Transverse colon (tissue), 4 donors: ENCODE measurements at regions of chr1 and their contacts with region 1.

Region 1: GRCh38 chr1:3249631-3250501 is 180.9 kb downstream of the PRDM16 start:
- DNase-seq: peak; percentile 11
- H3K4me3 ChIP-seq: no peak overlapping the region
- H3K27ac ChIP-seq: no peak overlapping the region
- H3K4me1 ChIP-seq: peaks cover 0 to 11% (median 5%) of the 10 kb centered on the region in 4 donors
- H3K27me3 ChIP-seq: peaks cover 43% of the 10 kb centered on the region
- CTCF ChIP-seq: no peak
- EP300 ChIP-seq: no peak
- POLR2A ChIP-seq: no peak

Region 2: GRCh38 chr1:3126756-3127597 is 122.9 kb before region 1 on chr1:
- in situ Hi-C with region 1: no loop called
- intact Hi-C with region 1: no loop called
- DNase-seq: no peak
- H3K4me3 ChIP-seq: no peak overlapping the region
- H3K27ac ChIP-seq: peak overlapping the region; percentile 21 to 53 (median 38)
- H3K4me1 ChIP-seq: peaks cover 0 to 21% (median 4%) of the 10 kb centered on the region in 4 donors
- H3K27me3 ChIP-seq: no peaks in the 10 kb centered on the region
- CTCF ChIP-seq: no peak
- EP300 ChIP-seq: no peak
- POLR2A ChIP-seq: no peak

Region 3: DNA sequence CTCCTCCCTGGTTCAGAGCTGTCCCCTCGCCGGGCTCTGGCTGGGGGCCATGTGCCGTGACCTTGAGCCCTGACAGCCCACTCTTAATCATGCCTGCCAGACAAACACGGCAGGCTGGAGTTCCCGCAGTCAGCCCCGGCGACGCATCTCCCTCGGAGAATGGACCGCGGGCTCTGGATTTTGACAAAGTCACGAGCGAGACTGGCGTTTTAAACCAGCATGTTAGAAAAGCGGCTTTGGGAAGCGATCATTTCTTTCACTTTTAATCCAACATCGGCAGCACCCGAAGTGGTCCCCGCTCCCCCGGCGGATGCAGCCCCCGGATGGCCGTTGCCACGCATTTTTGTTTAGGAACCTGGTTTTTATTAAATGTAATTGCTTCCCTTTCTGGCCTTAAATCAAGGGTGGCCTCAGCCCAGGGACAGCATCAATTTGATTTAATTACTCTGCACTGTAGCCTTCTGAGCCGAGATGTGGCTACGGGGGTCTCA is 110.0 kb before region 1 on chr1:
- in situ Hi-C with region 1: no loop called
- intact Hi-C with region 1: no loop called
- DNase-seq: no peak
- H3K4me3 ChIP-seq: peak overlapping the region in 1 of 4 donors; percentile 25
- H3K27ac ChIP-seq: no peak overlapping the region
- H3K4me1 ChIP-seq: peaks cover 0 to 10% (median 2%) of the 10 kb centered on the region in 4 donors
- H3K27me3 ChIP-seq: peaks cover 50% of the 10 kb centered on the region
- CTCF ChIP-seq: no peak
- EP300 ChIP-seq: no peak
- POLR2A ChIP-seq: no peak

Region 4: DNA sequence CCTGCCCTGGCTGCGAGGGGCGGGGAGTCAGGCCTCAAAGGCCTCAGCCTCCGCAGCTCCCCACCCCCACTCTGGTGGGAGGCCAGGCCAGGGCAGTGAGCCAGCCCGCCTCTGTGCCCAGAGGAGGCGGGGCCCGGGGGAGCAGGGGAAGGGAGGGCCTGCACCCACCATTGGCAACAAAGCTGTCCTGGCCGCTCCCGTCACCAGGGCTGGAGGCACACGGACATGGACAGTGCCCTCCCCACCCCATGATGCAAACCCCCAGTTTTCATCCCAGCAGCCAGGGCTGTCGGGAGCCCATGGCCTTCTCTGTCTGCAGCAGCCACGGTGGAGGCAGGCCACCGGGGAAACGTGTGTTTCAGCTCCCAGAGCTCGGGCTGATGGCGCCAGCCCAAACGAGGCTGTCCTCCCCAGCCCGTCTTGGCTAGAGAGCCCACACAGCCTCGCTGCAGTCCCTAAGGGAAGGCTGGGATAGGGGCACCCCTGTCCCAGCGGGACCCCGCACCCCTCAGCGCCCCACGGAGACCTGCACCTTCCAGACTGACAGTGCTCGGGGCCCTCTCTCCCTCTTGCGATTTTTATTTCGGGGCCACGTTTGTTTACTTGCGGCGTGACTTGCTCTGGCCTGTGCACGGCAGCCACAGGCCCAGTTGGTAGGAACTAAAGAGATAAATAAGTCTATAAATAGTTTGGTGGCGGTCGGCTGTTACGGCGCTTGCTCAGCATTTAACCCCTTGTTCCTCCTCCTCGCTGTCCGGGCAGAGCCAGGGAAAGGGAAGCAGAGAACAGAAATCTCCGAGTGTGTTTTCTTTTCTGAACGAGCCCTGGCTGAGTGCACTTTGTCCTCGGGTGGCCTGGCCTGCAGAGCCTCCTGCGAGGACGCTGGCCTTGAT is 79.1 kb before region 1 on chr1:
- in situ Hi-C with region 1: loop called in 1 of 4 experiments (anchors 25 kb)
- intact Hi-C with region 1: no loop called
- DNase-seq: peak; percentile 63
- H3K4me3 ChIP-seq: peak overlapping the region in 3 of 4 donors; percentile 4 to 38 (median 18)
- H3K27ac ChIP-seq: peak overlapping the region; percentile 70 to 80 (median 78)
- H3K4me1 ChIP-seq: peaks cover 20 to 36% (median 24%) of the 10 kb centered on the region in 4 donors
- H3K27me3 ChIP-seq: no peaks in the 10 kb centered on the region
- CTCF ChIP-seq: no peak
- EP300 ChIP-seq: no peak
- POLR2A ChIP-seq: no peak

Region 5: GRCh38 chr1:3639397-3639911 is 389.6 kb after region 1 on chr1:
- in situ Hi-C with region 1: no loop called
- intact Hi-C with region 1: no loop called
- DNase-seq: no peak
- H3K4me3 ChIP-seq: no peak overlapping the region
- H3K27ac ChIP-seq: no peak overlapping the region
- H3K4me1 ChIP-seq: no peaks in the 10 kb centered on the region
- H3K27me3 ChIP-seq: no peaks in the 10 kb centered on the region
- CTCF ChIP-seq: no peak
- EP300 ChIP-seq: no peak
- POLR2A ChIP-seq: no peak

Region 6: DNA sequence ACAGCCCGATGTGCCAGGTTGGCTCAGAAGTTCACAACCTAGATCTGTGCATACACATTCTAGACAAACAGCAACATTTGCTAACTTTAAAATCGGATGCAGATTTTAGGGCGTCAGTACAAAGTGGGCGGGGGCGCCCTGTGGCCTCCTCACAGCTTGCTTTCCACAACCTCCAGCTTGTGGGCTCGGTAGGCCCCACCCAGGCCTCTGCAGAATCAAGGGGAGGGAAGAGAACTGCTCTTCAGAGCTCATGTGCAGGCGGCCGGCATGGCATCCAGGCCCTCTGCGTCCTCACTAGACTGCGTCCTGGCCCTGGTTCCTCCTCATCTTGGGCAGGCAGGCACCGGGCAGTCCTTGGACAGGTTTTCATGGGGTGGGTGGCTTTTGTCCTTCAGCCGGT is 1463.8 kb after region 1 on chr1:
- in situ Hi-C with region 1: no loop called
- intact Hi-C with region 1: no loop called
- DNase-seq: no peak
- H3K4me3 ChIP-seq: no peak overlapping the region
- H3K27ac ChIP-seq: no peak overlapping the region
- H3K4me1 ChIP-seq: no peaks in the 10 kb centered on the region
- H3K27me3 ChIP-seq: peaks cover 20% of the 10 kb centered on the region
- CTCF ChIP-seq: no peak
- EP300 ChIP-seq: no peak
- POLR2A ChIP-seq: no peak